ENCODE measurements at regions of chr2 and their contacts with region 1.

Region 1: GRCh38 chr2:43024515-43025011 is 201.8 kb downstream of the ZFP36L2 start:
- DNase-seq: peak; percentile 77 to 78
- ATAC-seq: peak; percentile 45 to 80 (median 74)
- H3K4me3 ChIP-seq: no peak overlapping the region
- H3K27ac ChIP-seq: peak overlapping the region in 3 of 10 donors; percentile 9 to 31 (median 22)
- H3K4me1 ChIP-seq: peaks cover 7 to 43% (median 27%) of the 10 kb centered on the region in 9 donors
- H3K27me3 ChIP-seq: no peaks in the 10 kb centered on the region
- CTCF ChIP-seq: peak; percentile 58 to 88 (median 85)

Region 2: GRCh38 chr2:42878581-42878980 is 146.0 kb before region 1 on chr2:
- intact Hi-C with region 1: no loop called
- DNase-seq: no peak
- ATAC-seq: no peak
- H3K4me3 ChIP-seq: no peak overlapping the region
- H3K27ac ChIP-seq: peak overlapping the region; percentile 61 to 95 (median 82)
- H3K4me1 ChIP-seq: peaks cover 33 to 86% (median 71%) of the 10 kb centered on the region in 9 donors
- H3K27me3 ChIP-seq: no peaks in the 10 kb centered on the region
- CTCF ChIP-seq: no peak

Region 3: DNA sequence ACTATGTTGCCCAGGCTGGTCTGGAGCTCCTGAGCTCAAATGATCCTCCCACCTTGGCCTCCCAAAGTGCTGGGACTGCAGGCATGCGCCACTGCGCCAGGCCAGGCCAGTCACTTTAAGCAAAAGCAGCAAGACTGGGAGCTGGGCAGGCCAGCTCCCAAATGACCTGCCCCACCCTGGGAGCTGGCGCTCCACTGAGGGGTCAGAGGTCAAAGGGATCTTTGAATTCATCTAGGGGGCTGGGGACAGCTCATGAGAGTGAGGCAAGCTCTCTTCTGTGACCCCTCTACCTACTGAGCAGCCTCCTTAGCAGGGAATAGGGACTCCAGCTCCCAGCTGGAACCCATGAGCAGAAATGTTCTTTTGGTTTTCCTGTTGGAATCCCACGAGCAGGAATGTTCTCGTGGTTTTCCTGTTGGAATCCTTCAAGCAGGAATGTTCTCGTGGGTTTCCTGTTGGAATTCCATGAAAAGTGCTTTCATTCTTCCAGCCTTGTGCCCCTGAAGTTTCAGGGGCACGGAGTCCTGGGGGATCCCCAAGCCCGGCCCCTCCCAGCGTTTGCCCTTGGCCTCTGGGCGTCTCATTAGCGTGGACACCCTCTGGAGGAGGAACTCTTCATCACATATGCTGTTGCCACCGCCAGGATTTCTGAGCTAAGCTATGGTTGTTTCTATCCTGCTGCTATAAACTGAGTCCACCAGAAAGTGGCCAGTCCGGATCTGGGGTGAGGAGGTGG is 70.2 kb before region 1 on chr2:
- intact Hi-C with region 1: loop called in 1 of 10 experiments (anchors 5 kb)
- DNase-seq: no peak
- ATAC-seq: peak in 3 of 8 donors; percentile 24 to 57 (median 26)
- H3K4me3 ChIP-seq: no peak overlapping the region
- H3K27ac ChIP-seq: peak overlapping the region; percentile 39 to 87 (median 63)
- H3K4me1 ChIP-seq: peaks cover 20 to 79% (median 45%) of the 10 kb centered on the region in 9 donors
- H3K27me3 ChIP-seq: no peaks in the 10 kb centered on the region
- CTCF ChIP-seq: peak in 2 of 9 donors; percentile 13 to 19

Region 4: DNA sequence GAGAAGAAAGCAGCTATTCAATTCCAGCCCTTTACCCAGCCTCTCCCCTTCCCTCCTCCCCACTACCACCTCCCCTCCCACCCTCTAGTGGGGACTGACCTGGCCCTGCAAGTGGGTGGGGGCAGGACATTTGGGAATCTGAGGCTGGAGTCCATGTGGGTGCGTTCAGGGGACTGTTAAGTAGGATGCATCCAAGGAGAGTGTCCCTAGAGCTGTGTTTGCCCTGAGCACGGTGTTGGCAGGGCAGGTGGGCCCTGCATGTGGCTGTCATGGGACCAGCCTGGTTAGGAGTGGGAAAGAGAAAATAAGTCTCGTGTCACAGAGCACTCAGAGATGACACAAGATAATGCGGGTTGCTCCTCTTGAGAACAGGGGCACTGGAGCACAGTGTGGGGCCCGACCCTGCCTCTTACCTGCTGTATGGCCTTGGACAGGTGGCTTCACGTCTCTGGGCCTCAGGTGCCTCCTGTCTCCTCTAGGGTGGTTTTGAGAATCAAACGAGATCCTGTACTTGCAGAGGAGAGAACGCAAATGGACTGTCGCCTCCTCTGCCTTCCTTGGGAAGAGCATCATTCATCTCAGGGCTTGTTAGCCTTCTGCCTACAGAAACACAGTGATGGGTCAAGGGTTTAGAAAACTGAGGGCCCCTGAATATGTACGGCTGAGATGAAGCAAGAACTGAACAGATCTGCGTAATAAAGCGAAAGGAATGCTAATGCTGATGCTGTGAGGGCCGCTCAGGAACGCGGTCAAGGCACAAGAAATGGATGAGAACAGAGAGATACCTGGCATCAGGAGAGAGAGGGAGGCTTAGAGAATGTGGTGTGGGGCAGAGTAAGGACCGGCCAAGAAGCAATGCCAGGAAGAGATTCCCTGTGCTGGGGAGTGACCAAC is 44.4 kb before region 1 on chr2:
- intact Hi-C with region 1: loop called in 8 of 10 experiments (anchors 5 to 10 kb)
- DNase-seq: no peak
- ATAC-seq: no peak
- H3K4me3 ChIP-seq: no peak overlapping the region
- H3K27ac ChIP-seq: no peak overlapping the region
- H3K4me1 ChIP-seq: peaks cover 7 to 28% (median 11%) of the 10 kb centered on the region in 9 donors
- H3K27me3 ChIP-seq: no peaks in the 10 kb centered on the region
- CTCF ChIP-seq: no peak

Region 5: GRCh38 chr2:43115881-43116280 is 91.3 kb after region 1 on chr2:
- intact Hi-C with region 1: loop called in 4 of 10 experiments (anchors 5 to 10 kb)
- DNase-seq: no peak
- ATAC-seq: no peak
- H3K4me3 ChIP-seq: no peak overlapping the region
- H3K27ac ChIP-seq: no peak overlapping the region
- H3K4me1 ChIP-seq: peaks cover 4 to 30% (median 20%) of the 10 kb centered on the region in 9 donors
- H3K27me3 ChIP-seq: no peaks in the 10 kb centered on the region
- CTCF ChIP-seq: no peak

Region 6: GRCh38 chr2:43484323-43484930 is 459.9 kb after region 1 on chr2:
- intact Hi-C with region 1: loop called in 1 of 10 experiments (anchors 5 kb)
- DNase-seq: peak in 1 of 2 donors; percentile 20
- ATAC-seq: peak in 6 of 8 donors; percentile 60 to 68 (median 64)
- H3K4me3 ChIP-seq: no peak overlapping the region
- H3K27ac ChIP-seq: peak overlapping the region in 5 of 10 donors; percentile 13 to 69 (median 65)
- H3K4me1 ChIP-seq: peaks cover 8 to 48% (median 29%) of the 10 kb centered on the region in 9 donors
- H3K27me3 ChIP-seq: no peaks in the 10 kb centered on the region
- CTCF ChIP-seq: peak; percentile 27 to 83 (median 71)

Measured in heart right ventricle (tissue), 16 donors.